ENCODE measurements at regions of chr3 and their contacts with region 1.

Region 1: GRCh38 chr3:59839810-59840515 is 790.1 kb upstream of the CFAP20DC start:
- DNase-seq: no peak
- ATAC-seq: peak; percentile 90
- H3K4me3 Mint-ChIP-seq: peak overlapping the region; percentile 76
- H3K27ac Mint-ChIP-seq: peak overlapping the region; percentile 95
- H3K4me1 Mint-ChIP-seq: peaks cover 48% of the 10 kb centered on the region
- H3K27me3 Mint-ChIP-seq: no peaks in the 10 kb centered on the region
- CTCF ChIP-seq: no peak

Region 2: DNA sequence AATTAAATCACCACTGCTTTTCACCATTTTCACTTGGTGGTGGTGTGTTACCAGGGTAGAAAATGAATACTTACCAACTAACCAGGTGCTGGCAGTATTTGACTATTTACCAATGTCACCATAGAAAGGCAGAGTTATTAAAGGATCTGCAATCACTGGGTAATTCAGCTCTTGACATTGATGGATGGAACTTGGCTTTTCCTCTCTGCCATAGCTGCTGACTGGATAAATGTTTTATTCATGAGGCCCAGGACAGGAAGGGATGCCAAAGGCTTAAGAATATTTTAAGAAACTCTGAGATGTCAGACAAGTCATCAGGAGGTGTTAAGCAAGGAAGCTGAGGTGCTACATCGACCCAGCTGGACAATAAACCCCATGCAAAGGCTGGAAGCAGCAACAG is 294.6 kb before region 1 on chr3:
- CTCF ChIA-PET with region 1: no interaction called
- POLR2A ChIA-PET with region 1: no interaction called
- intact Hi-C with region 1: no loop called
- DNase-seq: no peak
- ATAC-seq: no peak
- H3K4me3 Mint-ChIP-seq: no peak overlapping the region
- H3K27ac Mint-ChIP-seq: no peak overlapping the region
- H3K4me1 Mint-ChIP-seq: no peaks in the 10 kb centered on the region
- H3K27me3 Mint-ChIP-seq: no peaks in the 10 kb centered on the region
- CTCF ChIP-seq: no peak

Region 3: DNA sequence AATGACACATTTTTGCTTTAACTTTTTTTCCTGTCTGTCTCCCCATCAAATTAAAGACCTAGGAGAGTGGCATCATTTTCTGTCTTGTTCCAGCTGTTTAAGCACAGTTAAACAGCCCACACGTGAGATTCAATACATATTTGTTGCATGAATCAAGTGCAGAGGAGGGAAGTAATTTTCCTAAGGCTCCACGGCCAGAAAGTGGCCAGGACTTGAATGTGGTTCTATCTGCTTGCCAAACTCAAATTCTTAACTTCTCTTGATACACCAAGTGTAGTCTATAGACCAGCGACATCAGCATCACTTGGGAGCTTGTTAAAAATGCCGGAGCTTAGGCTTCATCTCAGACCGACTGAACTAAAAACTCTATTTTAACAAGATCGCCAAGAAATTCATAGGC is 65.3 kb before region 1 on chr3:
- CTCF ChIA-PET with region 1: no interaction called
- POLR2A ChIA-PET with region 1: interaction called, 3 read pairs
- intact Hi-C with region 1: loop called (anchors 5 kb)
- DNase-seq: no peak
- ATAC-seq: no peak
- H3K4me3 Mint-ChIP-seq: no peak overlapping the region
- H3K27ac Mint-ChIP-seq: no peak overlapping the region
- H3K4me1 Mint-ChIP-seq: peaks cover 40% of the 10 kb centered on the region
- H3K27me3 Mint-ChIP-seq: no peaks in the 10 kb centered on the region
- CTCF ChIP-seq: no peak

Measured in activated B cell treated with CpG ODN at 0.5 μM for 24 hours (primary cell).